HEK293T (cell line): ENCODE measurements at regions of chr11 and their contacts with region 1.

Region 1: DNA sequence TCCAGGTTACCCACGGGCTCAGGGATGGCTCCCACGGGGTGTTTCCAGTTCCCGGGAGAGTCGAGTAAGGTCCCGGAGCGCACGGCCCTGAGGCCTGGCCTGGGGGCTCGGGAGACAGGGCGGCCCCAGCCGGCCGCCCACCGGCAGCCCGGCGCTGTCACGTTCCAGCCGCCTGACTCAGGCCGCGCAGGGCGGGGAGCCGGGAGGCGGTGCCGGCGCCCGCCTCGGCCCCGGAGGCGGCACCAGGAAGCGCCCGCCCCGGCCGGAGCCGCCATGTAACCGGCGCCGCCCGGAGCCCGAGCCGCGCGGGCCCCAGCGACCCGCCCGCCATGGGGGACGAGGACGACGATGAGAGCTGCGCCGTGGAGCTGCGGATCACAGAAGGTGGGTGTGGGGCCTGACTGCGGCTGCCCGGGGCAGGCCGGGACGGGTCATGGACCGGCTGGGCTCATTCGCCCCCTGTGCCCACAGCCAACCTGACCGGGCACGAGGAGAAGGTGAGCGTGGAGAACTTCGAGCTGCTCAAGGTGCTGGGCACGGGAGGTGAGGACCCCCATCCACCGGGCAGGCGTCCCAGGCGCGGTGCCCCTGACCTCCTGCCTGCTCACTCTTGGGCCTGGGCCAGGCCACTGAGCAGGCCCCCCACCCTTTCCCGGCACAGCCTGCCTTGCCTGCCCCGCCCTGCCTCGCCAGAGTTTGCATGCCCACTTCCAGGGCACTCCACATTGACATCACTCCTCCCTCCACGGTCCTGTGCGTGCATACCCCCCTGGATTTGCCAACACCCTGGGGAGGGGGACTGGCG is at the start of gene RPS6KA4:
- DNase-seq: peak; percentile 76

Region 2: GRCh38 chr11:64165849-64166635 is 193.1 kb before region 1 on chr11 and contains the start of gene MACROD1:
- CTCF ChIA-PET with region 1: no interaction called
- POLR2A ChIA-PET with region 1: no interaction called
- DNase-seq: peak; percentile 85

Region 3: DNA sequence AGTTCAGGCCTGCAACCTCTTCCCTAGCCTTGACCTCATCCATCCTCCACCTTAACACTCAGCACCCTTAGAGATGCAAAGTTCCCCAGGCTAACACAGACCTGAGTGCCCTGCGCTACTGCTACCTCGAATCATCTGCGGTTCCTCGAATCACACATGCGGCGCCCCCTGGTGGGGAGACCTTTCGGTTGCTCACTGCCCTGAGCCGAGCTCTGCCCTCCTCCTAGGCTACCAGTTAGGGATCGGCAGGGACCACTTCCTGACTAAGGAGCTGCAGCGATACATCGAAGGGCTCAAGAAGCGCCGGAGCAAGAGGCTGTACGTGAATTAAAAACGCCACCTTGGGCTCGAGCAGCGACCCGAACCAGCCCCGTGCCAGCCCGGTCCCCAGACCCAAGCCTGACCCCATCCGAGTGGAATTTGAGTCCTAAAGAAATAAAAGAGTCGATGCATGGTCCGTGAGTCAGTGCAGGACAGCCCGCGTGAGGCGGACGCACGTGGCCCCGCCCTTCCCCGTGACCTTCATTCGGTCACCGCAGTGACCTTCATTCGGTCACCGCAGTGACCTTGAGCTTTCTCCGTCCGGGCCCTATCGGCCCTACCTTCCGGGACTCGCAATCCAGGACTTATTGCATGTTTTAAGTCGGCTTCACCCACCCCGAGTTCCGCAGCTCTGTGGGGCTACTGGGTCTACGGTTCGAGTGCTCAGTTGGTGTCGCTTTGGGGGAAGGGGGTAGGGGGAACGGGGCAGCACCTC is 54.6 kb before region 1 on chr11:
- CTCF ChIA-PET with region 1: interaction called, 11 read pairs
- POLR2A ChIA-PET with region 1: interaction called, 9 read pairs
- DNase-seq: peak; percentile 81

Region 4: DNA sequence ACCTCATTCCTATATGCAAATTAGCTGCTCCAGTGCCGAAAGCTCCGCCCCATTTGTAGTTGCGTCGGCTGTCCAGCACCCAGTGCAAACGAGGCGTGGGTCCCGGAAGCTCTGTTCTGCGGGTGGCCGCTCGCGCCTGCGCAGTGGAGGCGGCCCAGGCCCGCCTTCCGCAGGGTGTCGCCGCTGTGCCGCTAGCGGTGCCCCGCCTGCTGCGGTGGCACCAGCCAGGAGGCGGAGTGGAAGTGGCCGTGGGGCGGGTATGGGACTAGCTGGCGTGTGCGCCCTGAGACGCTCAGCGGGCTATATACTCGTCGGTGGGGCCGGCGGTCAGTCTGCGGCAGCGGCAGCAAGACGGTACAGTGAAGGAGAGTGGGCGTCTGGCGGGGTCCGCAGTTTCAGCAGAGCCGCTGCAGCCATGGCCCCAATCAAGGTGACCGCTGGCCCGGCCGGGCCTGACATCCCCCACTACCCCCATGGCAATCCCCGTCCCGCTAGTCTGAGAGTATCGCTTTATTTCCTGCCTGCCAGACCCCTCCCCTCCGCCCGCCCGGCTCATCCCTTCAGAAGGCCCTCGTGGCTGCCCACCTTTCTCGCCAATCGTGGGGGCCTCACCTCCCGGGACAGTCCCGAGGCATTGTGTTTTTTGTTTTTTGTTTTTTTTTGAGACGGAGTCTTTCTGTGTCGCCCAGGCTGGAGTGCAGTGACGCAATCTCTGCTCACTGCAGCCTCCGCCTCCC is 41.0 kb before region 1 on chr11 and contains the start of gene PRDX5:
- CTCF ChIA-PET with region 1: interaction called, 38 read pairs
- POLR2A ChIA-PET with region 1: interaction called, 70 read pairs
- DNase-seq: peak; percentile 96

Region 5: GRCh38 chr11:64341851-64342791 is 17.0 kb before region 1 on chr11:
- CTCF ChIA-PET with region 1: interaction called, 33 read pairs
- POLR2A ChIA-PET with region 1: interaction called, 5 read pairs
- DNase-seq: peak; percentile 91

Region 6: DNA sequence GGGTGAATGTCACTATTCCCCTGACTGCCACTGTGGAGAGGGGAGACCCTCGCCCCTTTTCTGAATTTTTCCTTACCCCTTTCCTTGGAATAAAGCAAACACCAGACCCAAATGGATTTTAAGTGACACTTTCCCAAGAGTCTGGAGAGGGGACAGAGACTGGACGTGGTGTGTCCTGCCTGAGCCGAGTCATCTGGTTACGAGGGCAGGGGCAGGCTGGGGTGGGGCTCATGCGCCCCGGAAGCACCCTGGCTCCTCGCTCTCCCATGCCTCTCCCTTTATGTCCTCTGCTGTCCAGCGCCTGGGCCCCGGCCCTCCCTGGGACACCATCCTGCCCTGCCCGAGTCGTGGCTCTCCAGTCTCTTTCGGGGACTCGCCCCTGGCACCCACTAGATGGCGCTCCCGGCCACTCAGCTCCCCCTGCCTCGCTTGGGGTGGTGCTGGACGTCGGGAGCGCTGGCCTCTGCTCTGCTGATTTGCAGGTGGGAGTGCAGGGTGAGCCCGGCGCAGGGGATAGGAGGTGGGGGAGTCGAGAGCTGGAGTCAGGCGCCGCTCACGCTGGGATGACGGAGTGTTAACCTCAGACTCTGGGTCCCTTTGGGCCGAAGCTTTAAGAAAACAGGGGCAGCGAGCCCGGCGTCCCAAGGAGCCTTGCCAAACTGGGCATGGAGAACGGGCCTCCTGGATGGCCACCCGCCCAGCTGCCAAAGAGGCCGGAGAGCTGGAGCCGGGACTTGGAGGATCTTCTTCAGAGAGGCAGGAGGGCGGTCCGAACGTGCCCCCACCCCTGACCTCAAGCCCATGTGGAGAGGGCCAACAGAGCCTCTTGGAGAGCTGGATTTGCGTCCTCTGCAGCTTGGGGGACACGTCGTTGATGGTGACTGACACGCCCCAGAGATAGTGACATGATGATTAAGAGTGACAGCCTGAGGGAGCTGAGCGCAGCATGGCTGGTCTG is 89.8 kb after region 1 on chr11:
- CTCF ChIA-PET with region 1: interaction called, 18 read pairs
- POLR2A ChIA-PET with region 1: interaction called, 3 read pairs
- DNase-seq: peak; percentile 86

Region 7: GRCh38 chr11:64608046-64608445 is 248.9 kb after region 1 on chr11:
- CTCF ChIA-PET with region 1: no interaction called
- POLR2A ChIA-PET with region 1: no interaction called
- DNase-seq: no peak